Esophagus squamous epithelium (tissue), 5 donors: ENCODE measurements at regions of chr4 and their contacts with region 1.

Region 1: GRCh38 chr4:87853108-87853507 is 20.3 kb downstream of the MEPE start:
- DNase-seq: no peak
- H3K4me3 ChIP-seq: no peak overlapping the region
- H3K27ac ChIP-seq: no peak overlapping the region
- H3K4me1 ChIP-seq: peaks cover 0 to 13% (median 5%) of the 10 kb centered on the region in 3 donors
- H3K27me3 ChIP-seq: no peaks in the 10 kb centered on the region
- CTCF ChIP-seq: peak in 5 of 6 experiments; percentile 17 to 49 (median 37)
- POLR2A ChIP-seq: no peak

Region 2: DNA sequence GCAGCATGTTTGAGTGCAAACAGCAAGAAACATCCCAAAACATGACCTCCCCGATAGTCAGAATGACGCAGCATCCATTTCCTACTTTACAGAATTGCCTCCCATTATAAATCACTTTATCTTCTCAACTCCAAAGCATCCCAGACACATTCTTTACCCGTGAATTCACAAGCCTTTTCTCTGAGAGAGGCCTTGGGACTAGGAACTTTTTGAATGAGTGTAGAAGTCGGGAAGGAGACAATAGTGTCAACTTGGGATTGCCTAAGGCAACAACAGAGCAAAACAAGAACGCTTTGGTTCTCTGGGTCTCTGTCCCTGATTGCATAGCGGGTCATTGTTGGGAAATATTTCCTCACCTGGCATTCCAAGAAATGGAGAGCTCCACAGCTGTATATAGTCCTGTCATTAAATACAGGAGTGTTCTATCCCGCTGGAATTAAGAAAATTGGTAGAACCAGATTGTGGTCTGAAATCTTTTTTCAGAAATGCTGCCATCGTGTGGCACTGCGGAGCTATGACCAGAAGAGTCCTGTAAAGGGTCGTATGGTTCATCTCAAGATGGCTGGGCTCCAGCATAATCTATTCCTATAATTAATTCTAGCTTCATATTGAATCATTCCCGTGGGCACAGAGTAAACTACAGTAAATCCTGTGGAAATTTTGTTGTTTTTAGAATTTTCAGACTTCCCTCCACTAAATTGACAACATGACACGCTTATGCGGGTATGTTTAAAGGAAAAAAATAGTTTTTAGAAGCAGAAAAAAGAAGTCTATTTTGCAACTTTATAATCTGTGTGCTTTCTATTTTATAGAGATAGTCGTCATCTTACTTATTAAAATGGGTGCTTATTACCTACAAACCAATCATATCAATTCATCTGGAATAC is 120.4 kb after region 1 on chr4:
- intact Hi-C with region 1: loop called (anchors 5 kb)
- DNase-seq: no peak
- H3K4me3 ChIP-seq: peak overlapping the region in 1 of 4 donors; percentile 10
- H3K27ac ChIP-seq: peak overlapping the region in 1 of 4 donors; percentile 2
- H3K4me1 ChIP-seq: peaks cover 0 to 7% (median 5%) of the 10 kb centered on the region in 3 donors
- H3K27me3 ChIP-seq: peaks cover 0 to 21% (median 0%) of the 10 kb centered on the region in 4 donors
- CTCF ChIP-seq: peak; percentile 38 to 81 (median 68)
- POLR2A ChIP-seq: no peak

Region 3: GRCh38 chr4:88143504-88143903 is 290.4 kb after region 1 on chr4:
- intact Hi-C with region 1: no loop called
- DNase-seq: no peak
- H3K4me3 ChIP-seq: no peak overlapping the region
- H3K27ac ChIP-seq: peak overlapping the region in 3 of 4 donors; percentile 6 to 67 (median 51)
- H3K4me1 ChIP-seq: peaks cover 6 to 51% (median 18%) of the 10 kb centered on the region in 3 donors
- H3K27me3 ChIP-seq: no peaks in the 10 kb centered on the region
- CTCF ChIP-seq: no peak
- POLR2A ChIP-seq: no peak

Region 4: GRCh38 chr4:88211473-88212252 is 358.6 kb after region 1 on chr4:
- intact Hi-C with region 1: loop called (anchors 10 kb)
- DNase-seq: no peak
- H3K4me3 ChIP-seq: no peak overlapping the region
- H3K27ac ChIP-seq: no peak overlapping the region
- H3K4me1 ChIP-seq: peaks cover 0 to 3% (median 0%) of the 10 kb centered on the region in 3 donors
- H3K27me3 ChIP-seq: no peaks in the 10 kb centered on the region
- CTCF ChIP-seq: peak; percentile 55 to 84 (median 71)
- POLR2A ChIP-seq: no peak